ENCODE measurements at regions of chr20 and their contacts with region 1.

Region 1: DNA sequence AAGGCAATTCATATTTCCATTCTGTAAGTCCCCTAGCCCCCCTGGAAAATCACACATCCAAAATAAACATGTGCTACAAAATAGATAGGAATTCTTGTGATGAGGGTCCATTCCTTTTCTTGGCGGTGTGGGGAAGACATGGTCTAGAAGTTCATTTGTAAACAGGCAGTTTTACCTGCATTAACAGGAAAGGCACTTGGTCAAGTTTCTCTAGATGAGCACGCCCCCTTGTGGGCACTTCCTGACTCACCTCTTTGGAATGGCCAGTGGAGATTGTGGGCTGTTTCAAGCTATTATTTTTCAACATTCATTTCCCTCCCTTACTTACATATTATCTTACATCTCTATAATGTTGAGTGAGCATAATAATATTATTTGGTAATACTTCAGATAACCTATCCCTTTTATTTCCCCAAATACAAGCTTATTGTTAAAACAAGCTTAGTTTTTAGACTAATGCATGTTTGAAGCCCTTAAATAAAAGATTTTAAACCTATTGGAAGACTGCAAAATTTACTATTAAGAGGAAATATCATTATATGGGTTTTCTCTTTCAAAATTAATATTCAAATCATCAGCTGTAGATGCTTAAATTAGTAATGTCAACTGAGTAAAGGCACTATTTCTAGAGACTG is 92.1 kb downstream of the TASP1 start:
- DNase-seq: peak; percentile 81 to 87
- H3K4me3 ChIP-seq: no peak overlapping the region
- H3K4me3 Mint-ChIP-seq: no peak overlapping the region
- H3K27ac Mint-ChIP-seq: no peak overlapping the region
- H3K4me1 ChIP-seq: no peaks in the 10 kb centered on the region
- H3K4me1 Mint-ChIP-seq: no peaks in the 10 kb centered on the region
- H3K27me3 ChIP-seq: no peaks in the 10 kb centered on the region
- H3K27me3 Mint-ChIP-seq: no peaks in the 10 kb centered on the region
- CTCF ChIP-seq: peak; percentile 82 to 90

Region 2: DNA sequence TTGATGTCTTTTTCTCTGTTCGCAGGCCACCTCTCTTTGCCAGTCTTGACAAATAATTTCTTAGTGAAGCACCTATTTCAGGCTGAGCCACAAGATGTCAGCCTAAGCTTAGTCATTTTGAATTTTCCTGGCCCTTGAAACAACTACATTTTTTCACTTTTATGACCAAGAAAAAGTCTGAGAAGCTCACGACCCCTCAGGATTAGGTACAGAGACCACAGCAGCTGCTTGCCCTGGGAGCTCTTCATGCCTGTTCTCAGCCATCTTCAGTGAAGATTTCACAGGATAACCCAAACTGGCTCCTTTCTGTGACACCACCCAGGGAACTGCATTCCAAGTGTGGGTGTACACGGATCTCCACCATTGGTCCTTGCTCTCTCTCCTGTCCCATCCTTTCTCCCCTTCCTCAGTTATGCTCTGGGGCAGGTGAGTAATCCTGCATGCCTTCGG is 576.2 kb before region 1 on chr20:
- CTCF ChIA-PET with region 1: interaction called, 7 read pairs
- POLR2A ChIA-PET with region 1: no interaction called
- intact Hi-C with region 1: loop called (anchors 1 kb)
- DNase-seq: peak in 1 of 2 experiments; percentile 55
- H3K4me3 ChIP-seq: no peak overlapping the region
- H3K4me3 Mint-ChIP-seq: no peak overlapping the region
- H3K27ac Mint-ChIP-seq: no peak overlapping the region
- H3K4me1 ChIP-seq: peaks cover 4% of the 10 kb centered on the region; the same call in 1 of the 2 replicates
- H3K4me1 Mint-ChIP-seq: peaks cover 7% of the 10 kb centered on the region
- H3K27me3 ChIP-seq: no peaks in the 10 kb centered on the region
- H3K27me3 Mint-ChIP-seq: no peaks in the 10 kb centered on the region
- CTCF ChIP-seq: peak; percentile 52 to 61

Region 3: DNA sequence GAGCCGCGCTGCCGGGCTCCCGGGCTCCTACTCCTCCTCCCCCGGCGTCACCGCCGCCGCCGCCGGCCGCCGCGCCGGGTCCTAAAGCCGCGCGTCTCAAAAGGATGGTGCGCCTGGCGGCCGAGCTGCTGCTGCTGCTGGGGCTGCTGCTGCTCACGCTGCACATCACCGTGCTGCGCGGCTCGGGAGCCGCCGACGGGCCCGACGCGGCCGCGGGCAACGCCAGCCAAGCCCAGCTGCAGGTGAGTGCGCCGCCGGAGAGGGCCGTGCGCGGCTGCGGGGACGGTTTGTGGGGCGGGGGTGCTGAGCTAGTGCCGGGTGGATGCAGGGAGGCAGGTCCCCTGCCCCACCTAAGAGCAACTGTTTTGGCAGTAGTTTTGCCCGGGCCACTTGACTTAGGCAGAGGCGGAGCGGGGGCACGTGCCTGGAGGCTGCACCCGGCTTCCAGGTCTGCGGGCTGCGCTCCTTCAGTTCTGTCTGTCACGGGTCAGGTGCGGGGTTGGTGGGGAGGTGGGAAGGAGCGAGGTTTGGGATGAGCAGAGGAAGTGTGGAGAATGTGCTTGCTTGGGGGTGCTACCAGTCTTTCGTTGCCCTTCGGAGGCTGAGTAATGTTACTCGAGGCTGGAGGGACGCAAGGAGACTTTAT is 324.8 kb before region 1 on chr20:
- CTCF ChIA-PET with region 1: no interaction called
- POLR2A ChIA-PET with region 1: no interaction called
- intact Hi-C with region 1: loop called (anchors 10 kb)
- DNase-seq: peak; percentile 65 to 77
- H3K4me3 ChIP-seq: peak overlapping the region; percentile 54
- H3K4me3 Mint-ChIP-seq: peak overlapping the region; percentile 69
- H3K27ac Mint-ChIP-seq: no peak overlapping the region
- H3K4me1 ChIP-seq: peaks cover 10% of the 10 kb centered on the region
- H3K4me1 Mint-ChIP-seq: no peaks in the 10 kb centered on the region
- H3K27me3 ChIP-seq: no peaks in the 10 kb centered on the region; the same call in 1 of the 2 replicates
- H3K27me3 Mint-ChIP-seq: peaks cover 10% of the 10 kb centered on the region
- CTCF ChIP-seq: no peak

Region 4: DNA sequence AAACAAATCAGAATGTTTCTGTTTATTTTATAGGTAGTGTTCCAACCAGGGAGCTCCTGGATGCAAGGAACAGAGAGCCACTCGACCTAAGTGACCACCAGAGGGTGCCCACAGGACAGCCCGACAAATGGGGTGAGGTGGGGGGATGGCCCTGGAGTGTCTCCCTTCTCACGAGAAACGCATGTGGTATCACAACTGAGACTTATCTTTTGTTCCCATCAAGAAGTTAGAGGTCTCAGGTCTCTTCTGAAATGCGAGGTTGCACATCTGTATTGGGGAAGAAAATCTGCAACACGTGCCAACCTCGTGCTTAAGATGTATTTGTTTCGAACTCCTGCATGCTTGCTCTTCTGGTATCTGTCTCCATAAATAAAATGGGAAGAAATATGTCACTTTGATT is 221.6 kb before region 1 on chr20:
- CTCF ChIA-PET with region 1: interaction called, 53 read pairs
- POLR2A ChIA-PET with region 1: no interaction called
- intact Hi-C with region 1: loop called (anchors 1 kb)
- DNase-seq: peak; percentile 68 to 74
- H3K4me3 ChIP-seq: no peak overlapping the region
- H3K4me3 Mint-ChIP-seq: no peak overlapping the region
- H3K27ac Mint-ChIP-seq: no peak overlapping the region
- H3K4me1 ChIP-seq: peaks cover 34% of the 10 kb centered on the region
- H3K4me1 Mint-ChIP-seq: peaks cover 27% of the 10 kb centered on the region
- H3K27me3 ChIP-seq: no peaks in the 10 kb centered on the region
- H3K27me3 Mint-ChIP-seq: no peaks in the 10 kb centered on the region
- CTCF ChIP-seq: peak; percentile 61 to 76

Region 5: GRCh38 chr20:13430346-13431002 is 116.1 kb before region 1 on chr20:
- CTCF ChIA-PET with region 1: no interaction called
- POLR2A ChIA-PET with region 1: no interaction called
- intact Hi-C with region 1: loop called (anchors 10 kb)
- DNase-seq: peak; percentile 41 to 42
- H3K4me3 ChIP-seq: no peak overlapping the region
- H3K4me3 Mint-ChIP-seq: peak overlapping the region; percentile 18
- H3K27ac Mint-ChIP-seq: peak overlapping the region; percentile 64
- H3K4me1 ChIP-seq: peaks cover 17% of the 10 kb centered on the region
- H3K4me1 Mint-ChIP-seq: peaks cover 13% of the 10 kb centered on the region
- H3K27me3 ChIP-seq: no peaks in the 10 kb centered on the region
- H3K27me3 Mint-ChIP-seq: no peaks in the 10 kb centered on the region
- CTCF ChIP-seq: no peak

Region 6: GRCh38 chr20:13865791-13866351 is 319.3 kb after region 1 on chr20:
- CTCF ChIA-PET with region 1: no interaction called
- POLR2A ChIA-PET with region 1: no interaction called
- intact Hi-C with region 1: no loop called
- DNase-seq: no peak
- H3K4me3 ChIP-seq: no peak overlapping the region
- H3K4me3 Mint-ChIP-seq: no peak overlapping the region
- H3K27ac Mint-ChIP-seq: no peak overlapping the region
- H3K4me1 ChIP-seq: no peaks in the 10 kb centered on the region
- H3K4me1 Mint-ChIP-seq: no peaks in the 10 kb centered on the region
- H3K27me3 ChIP-seq: no peaks in the 10 kb centered on the region; the same call in 1 of the 2 replicates
- H3K27me3 Mint-ChIP-seq: peaks cover 7% of the 10 kb centered on the region
- CTCF ChIP-seq: no peak

Measured in Caco-2 (cell line).